HEK293 (cell line): ENCODE measurements at regions of chr10 and their contacts with region 1.

Region 1: GRCh38 chr10:103481974-103482531 is 3.0 kb upstream of the CALHM3 start:
- H3K4me3 ChIP-seq: no peak overlapping the region
- H3K27ac ChIP-seq: no peak overlapping the region
- H3K4me1 ChIP-seq: no peaks in the 10 kb centered on the region
- CTCF ChIP-seq: peak; percentile 46; the same call in 1 of the 2 replicates

Region 2: GRCh38 chr10:103427866-103428265 is 54.2 kb before region 1 on chr10:
- CTCF ChIA-PET with region 1: interaction called, 10 read pairs
- POLR2A ChIA-PET with region 1: interaction called, 4 read pairs
- H3K4me3 ChIP-seq: no peak overlapping the region
- H3K27ac ChIP-seq: no peak overlapping the region
- H3K4me1 ChIP-seq: no peaks in the 10 kb centered on the region
- CTCF ChIP-seq: no peak